Right cardiac atrium (tissue), 5 donors: ENCODE measurements at regions of chr9 and their contacts with region 1.

Region 1: DNA sequence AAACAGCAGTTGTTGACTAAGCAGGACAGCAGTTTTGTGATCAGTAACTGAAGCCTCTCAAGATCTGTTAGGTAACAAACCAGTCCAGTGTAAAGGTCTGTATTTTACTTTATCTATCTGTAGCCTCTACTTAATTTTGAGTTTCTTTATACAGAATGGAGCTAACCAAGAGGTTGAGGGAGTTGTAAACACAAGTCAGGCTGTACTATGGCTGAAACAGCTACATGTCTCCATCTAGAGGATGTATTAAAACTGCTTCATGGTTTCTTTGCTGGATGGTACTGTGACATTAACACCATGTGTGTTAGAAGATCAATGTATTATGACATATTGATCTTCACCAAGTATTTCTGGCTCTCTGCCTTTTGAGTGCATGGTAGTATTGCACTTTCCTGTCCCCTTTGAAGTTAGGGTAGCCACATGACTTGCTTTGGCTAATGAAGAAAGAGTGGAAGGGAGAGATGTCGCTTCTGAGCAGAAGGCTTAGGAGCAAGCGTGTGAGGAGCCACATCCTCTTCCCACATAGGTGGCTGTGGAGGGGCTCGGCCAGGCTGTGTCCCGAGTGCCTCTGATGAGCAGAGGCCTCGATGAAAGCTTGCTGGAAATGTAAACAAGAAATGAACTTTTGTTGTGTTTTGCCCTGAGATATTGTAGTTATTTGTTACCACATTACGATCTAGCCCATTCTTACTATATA is 105.6 kb upstream of the PCA3 start:
- DNase-seq: no peak
- ATAC-seq: peak; percentile 84 to 85
- H3K4me3 ChIP-seq: no peak overlapping the region
- H3K27ac ChIP-seq: no peak overlapping the region
- H3K4me1 ChIP-seq: no peaks in the 10 kb centered on the region
- H3K27me3 ChIP-seq: no peaks in the 10 kb centered on the region

Region 2: DNA sequence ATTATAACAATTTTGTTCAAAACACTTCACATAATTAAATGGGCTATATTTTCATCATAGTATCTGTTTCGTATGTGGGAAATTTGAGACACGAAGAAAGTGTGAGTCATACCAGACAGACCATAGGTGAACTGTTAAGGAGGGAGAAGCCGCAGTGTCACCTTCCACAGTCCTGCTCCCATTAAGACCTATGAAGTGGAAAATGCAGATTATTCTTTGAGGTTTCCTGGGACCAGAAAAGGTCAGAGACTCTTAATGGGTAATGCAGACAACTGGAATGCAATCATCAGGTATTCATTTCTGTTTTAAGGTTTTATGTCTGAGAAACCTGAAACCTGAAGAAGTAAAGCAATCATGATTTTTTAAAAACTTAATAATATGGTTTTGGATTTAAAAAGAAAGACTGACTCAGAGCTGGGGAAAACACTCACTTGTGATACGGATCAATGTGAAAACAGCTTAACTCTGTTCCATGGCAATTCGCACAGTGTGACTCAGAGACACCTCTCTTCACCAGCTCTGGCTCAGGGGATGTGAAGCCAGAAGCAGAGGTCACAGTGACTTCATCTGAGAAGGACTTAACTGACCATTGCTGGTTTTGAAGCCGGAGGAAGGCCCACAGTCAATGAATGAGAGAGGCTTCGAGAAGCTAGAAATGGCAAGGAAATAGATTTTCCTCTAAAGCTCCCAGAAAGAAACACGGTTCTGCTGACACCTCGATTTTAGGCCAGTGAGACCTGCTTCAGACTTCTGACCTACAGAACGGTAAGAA is 216.9 kb before region 1 on chr9:
- intact Hi-C with region 1: loop called in 3 of 4 experiments (anchors 5 kb)
- DNase-seq: no peak
- ATAC-seq: no peak
- H3K4me3 ChIP-seq: no peak overlapping the region
- H3K27ac ChIP-seq: no peak overlapping the region
- H3K4me1 ChIP-seq: no peaks in the 10 kb centered on the region
- H3K27me3 ChIP-seq: no peaks in the 10 kb centered on the region

Region 3: DNA sequence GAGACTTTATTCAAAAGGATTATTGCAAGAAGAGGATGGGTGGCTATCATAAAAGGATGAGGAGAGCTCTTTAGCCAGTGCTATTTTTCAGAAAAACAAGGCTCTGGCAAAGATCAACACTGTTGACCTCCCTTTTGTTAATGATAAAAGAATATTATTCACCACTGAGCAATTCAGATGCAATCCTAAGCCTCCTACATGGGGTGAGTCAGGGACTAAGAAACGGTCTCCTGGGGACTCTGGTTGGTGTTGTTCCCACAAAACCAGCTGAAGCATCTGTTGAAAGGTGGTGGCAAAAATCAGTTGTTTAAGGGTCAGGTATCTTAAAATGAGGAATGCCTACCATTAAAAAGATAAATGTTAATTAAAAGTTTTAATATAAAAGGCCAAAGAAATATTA is 207.4 kb before region 1 on chr9:
- intact Hi-C with region 1: loop called (anchors 1 to 5 kb)
- DNase-seq: no peak
- ATAC-seq: no peak
- H3K4me3 ChIP-seq: no peak overlapping the region
- H3K27ac ChIP-seq: no peak overlapping the region
- H3K4me1 ChIP-seq: no peaks in the 10 kb centered on the region
- H3K27me3 ChIP-seq: no peaks in the 10 kb centered on the region

Region 4: GRCh38 chr9:76458903-76459690 is 199.6 kb before region 1 on chr9 and contains the start of gene GCNT1:
- intact Hi-C with region 1: loop called in 1 of 4 experiments (anchors 5 kb)
- DNase-seq: peak; percentile 83 to 94 (median 93)
- ATAC-seq: peak; percentile 98
- H3K4me3 ChIP-seq: peak within 1 kb of the TSS; percentile 64
- H3K27ac ChIP-seq: peak within 1 kb of the TSS; percentile 6
- H3K4me1 ChIP-seq: no peaks in the 10 kb centered on the region
- H3K27me3 ChIP-seq: no peaks in the 10 kb centered on the region
- total RNA-seq, gene GCNT1: 2.6 to 5.7 (median 4.0) TPM

Region 5: DNA sequence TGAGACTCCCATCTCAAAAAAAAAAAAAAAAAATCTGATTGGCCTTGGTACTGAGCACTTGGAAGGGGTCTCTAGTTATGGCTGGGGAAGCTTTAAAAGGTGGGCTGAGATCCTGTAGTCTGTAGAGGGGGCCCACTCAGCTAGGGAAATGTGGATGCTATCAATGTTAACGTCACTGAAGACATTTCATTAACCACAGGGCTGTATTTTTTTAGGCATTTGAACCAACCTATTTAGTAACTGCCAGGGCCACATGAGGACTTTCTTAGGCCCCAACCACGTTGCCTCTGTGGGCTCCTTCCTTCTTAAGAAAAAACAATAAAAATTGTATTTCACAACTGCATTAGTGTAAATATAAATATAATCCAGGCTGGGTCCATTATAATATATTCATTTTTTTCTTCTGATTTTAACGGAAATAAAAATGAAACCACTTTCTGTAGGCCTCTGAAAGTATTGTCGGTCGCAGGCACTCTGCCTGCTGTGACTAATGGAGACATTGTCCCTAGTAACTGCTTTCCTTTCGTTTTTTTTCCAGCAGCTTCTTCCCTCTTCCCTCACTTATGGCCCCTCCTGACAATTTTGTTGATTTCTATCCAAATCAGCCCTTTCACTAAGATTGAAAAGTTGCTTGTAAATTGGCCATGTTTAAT is 128.1 kb before region 1 on chr9:
- intact Hi-C with region 1: loop called in 1 of 4 experiments (anchors 10 kb)
- DNase-seq: peak; percentile 40 to 75 (median 51)
- ATAC-seq: peak; percentile 63 to 76
- H3K4me3 ChIP-seq: no peak overlapping the region
- H3K27ac ChIP-seq: no peak overlapping the region
- H3K4me1 ChIP-seq: no peaks in the 10 kb centered on the region
- H3K27me3 ChIP-seq: no peaks in the 10 kb centered on the region

Region 6: DNA sequence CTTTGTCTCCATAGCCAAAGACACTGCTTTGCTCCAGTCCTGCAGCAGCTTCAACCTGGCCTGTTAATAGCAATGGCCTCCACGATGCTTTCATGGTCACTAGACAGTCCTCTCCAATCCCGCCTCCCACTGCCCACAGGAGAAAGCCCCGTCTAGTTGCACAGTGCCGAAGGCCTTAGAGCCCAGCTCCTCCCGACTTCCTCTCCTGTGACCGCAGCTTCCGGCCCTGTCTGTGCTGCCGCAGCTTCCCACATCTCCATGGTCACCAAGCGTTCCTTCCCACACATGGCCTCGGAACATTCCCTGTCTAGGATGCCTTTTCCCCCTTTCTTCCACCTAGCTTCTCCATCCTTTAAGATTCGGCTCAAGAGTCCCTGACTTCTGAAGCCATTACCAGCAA is 129.0 kb after region 1 on chr9:
- intact Hi-C with region 1: no loop called
- DNase-seq: no peak
- ATAC-seq: no peak
- H3K4me3 ChIP-seq: no peak overlapping the region
- H3K27ac ChIP-seq: no peak overlapping the region
- H3K4me1 ChIP-seq: no peaks in the 10 kb centered on the region
- H3K27me3 ChIP-seq: no peaks in the 10 kb centered on the region

Region 7: GRCh38 chr9:76810377-76810957 is 151.8 kb after region 1 on chr9:
- intact Hi-C with region 1: no loop called
- DNase-seq: peak in 1 of 3 donors; percentile 23
- ATAC-seq: peak; percentile 77 to 80
- H3K4me3 ChIP-seq: no peak overlapping the region
- H3K27ac ChIP-seq: no peak overlapping the region
- H3K4me1 ChIP-seq: no peaks in the 10 kb centered on the region
- H3K27me3 ChIP-seq: no peaks in the 10 kb centered on the region